ENCODE measurements at regions of chr10 and their contacts with region 1.

Region 1: DNA sequence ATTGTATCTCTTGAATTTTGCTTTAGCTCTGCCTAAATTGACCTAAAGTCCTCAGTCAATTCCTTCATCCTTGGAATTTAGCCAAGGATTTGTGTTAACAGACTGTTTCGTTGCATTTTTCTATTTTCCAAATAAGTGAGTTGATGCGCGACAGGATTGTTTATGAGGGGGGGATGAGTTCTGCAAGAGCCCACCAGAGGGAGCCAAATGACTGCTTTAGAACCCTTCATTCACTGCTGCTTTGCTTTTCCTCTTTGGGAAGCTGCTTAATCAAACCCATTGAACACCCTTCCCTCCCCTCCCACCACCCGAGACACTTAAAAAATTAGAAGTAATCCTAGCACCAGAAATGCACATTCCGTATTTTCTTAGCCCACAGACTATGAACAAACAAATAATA is 33.7 kb upstream of the PTF1A start:
- DNase-seq: peak; percentile 60
- H3K4me3 ChIP-seq: no peak overlapping the region
- H3K27ac ChIP-seq: no peak overlapping the region
- H3K4me1 ChIP-seq: peaks cover 3% of the 10 kb centered on the region
- H3K27me3 ChIP-seq: no peaks in the 10 kb centered on the region
- CTCF ChIP-seq: peak; percentile 70 to 83
- POLR2A ChIP-seq: no peak

Region 2: DNA sequence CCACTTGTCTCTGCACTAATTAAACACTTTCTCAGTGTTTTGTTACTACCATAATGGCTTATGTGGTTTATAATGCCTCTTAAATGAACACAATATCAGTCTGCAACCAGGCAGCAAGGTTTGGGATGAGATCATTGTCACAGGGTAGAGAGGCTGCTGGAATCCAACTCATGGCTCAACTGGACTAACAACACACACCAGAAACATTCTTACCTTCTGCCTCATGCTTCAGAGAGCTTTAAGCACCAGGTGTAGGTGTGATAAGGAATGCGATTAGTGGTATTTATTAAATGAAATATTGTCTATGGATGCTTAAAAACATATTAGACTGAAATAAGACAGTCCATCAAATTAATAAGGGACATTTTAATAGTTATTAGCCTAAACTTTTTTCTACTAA is 59.1 kb after region 1 on chr10:
- CTCF ChIA-PET with region 1: no interaction called
- POLR2A ChIA-PET with region 1: no interaction called
- dilution Hi-C with region 1: no loop called
- intact Hi-C with region 1: no loop called
- DNase-seq: no peak
- H3K4me3 ChIP-seq: no peak overlapping the region
- H3K27ac ChIP-seq: no peak overlapping the region
- H3K4me1 ChIP-seq: no peaks in the 10 kb centered on the region
- H3K27me3 ChIP-seq: no peaks in the 10 kb centered on the region
- CTCF ChIP-seq: no peak
- POLR2A ChIP-seq: no peak

Region 3: DNA sequence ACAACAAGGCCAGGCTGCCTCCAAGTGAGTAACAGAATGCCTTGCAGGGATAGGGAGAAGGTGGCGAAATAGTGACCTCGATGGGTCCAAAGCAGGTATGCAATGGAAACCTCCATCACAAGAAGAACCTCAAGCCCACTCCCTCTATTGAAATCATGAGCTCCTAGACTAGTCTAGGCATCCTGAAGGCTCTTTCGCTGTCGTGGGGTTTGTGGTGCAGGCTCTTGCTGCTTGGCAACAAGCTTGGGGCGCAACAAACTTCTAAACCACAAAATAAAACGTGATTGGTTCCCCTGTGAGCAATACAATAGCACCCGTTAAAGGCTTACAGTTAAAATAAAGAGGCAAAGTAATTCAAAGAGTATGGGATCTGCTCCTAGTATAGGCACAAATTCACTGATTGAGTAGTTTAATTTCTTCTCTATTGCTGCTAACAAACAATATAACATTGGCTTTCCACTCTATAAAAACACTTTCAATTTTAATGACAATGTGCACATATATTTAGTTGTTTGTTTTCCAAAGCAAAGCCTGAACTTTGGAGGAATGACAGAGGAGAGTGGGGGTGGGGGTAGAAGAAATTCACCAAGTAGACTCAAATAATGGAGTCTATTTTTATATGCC is 122.2 kb after region 1 on chr10:
- CTCF ChIA-PET with region 1: no interaction called
- POLR2A ChIA-PET with region 1: no interaction called
- dilution Hi-C with region 1: no loop called
- intact Hi-C with region 1: no loop called
- DNase-seq: no peak
- H3K4me3 ChIP-seq: no peak overlapping the region
- H3K27ac ChIP-seq: no peak overlapping the region
- H3K4me1 ChIP-seq: no peaks in the 10 kb centered on the region
- H3K27me3 ChIP-seq: no peaks in the 10 kb centered on the region
- CTCF ChIP-seq: no peak
- POLR2A ChIP-seq: no peak

Region 4: DNA sequence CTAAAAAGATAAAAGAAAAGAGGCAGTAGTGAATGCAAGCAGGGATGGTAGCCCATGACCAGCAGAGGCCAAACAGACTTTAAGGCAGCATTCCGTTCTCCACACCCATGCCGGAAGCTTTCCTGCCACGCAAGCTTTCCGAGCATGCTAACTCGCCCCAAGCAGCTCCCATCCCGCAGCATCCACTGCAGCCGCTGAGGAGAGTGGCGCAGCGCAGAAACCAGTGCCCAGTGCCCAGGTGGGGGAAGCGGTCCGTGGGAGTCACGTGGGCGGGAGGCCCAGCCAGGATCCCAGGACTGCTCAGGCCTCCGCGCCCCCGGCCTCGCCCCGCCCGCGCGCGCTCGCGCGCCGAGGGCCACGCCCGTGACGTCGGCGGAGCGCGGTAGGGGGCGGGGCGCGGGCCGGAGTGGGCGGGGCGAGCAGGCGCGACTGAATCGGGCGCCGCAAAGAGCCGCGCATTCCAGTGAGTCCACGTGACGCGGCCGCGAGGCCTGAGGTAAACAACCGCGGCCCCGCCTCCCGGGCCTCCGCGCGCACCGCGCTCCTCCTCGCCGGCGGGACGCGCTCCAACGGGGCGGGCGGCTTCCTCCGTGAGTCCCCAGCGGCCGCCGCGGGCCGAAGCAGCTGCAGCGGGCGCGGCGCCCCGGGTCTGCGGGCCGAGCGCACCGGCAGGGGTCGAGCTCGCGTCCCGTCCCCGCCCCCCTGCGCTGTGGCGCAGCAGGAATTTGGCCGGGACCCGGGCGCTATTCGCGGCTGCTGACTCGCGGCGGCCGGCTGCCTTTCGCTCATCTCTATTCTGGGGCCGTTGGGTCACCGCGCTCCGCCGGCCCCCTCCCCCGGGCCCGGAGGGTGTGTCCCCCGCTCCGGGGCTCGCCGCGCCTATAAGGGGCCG is 280.4 kb after region 1 on chr10 and contains the start of gene OTUD1:
- CTCF ChIA-PET with region 1: no interaction called
- POLR2A ChIA-PET with region 1: no interaction called
- dilution Hi-C with region 1: no loop called
- intact Hi-C with region 1: no loop called
- DNase-seq: peak; percentile 91
- H3K4me3 ChIP-seq: peak within 1 kb of the TSS; percentile 39 to 82 (median 54)
- H3K27ac ChIP-seq: peak within 1 kb of the TSS; percentile 36
- H3K4me1 ChIP-seq: peaks cover 4% of the 10 kb centered on the region
- H3K27me3 ChIP-seq: no peaks in the 10 kb centered on the region
- CTCF ChIP-seq: peak in 1 of 2 donors; percentile 4
- POLR2A ChIP-seq: no peak
- total RNA-seq, gene OTUD1: 4.8 and 6.0 TPM in 2 replicates

Region 5: GRCh38 chr10:23525406-23525805 is 367.0 kb after region 1 on chr10:
- CTCF ChIA-PET with region 1: interaction called, 3 read pairs
- POLR2A ChIA-PET with region 1: no interaction called
- dilution Hi-C with region 1: no loop called
- intact Hi-C with region 1: loop called (anchors 2 kb)
- DNase-seq: no peak
- H3K4me3 ChIP-seq: no peak overlapping the region
- H3K27ac ChIP-seq: no peak overlapping the region
- H3K4me1 ChIP-seq: no peaks in the 10 kb centered on the region
- H3K27me3 ChIP-seq: no peaks in the 10 kb centered on the region
- CTCF ChIP-seq: peak in 1 of 2 donors; percentile 6
- POLR2A ChIP-seq: no peak

Region 6: DNA sequence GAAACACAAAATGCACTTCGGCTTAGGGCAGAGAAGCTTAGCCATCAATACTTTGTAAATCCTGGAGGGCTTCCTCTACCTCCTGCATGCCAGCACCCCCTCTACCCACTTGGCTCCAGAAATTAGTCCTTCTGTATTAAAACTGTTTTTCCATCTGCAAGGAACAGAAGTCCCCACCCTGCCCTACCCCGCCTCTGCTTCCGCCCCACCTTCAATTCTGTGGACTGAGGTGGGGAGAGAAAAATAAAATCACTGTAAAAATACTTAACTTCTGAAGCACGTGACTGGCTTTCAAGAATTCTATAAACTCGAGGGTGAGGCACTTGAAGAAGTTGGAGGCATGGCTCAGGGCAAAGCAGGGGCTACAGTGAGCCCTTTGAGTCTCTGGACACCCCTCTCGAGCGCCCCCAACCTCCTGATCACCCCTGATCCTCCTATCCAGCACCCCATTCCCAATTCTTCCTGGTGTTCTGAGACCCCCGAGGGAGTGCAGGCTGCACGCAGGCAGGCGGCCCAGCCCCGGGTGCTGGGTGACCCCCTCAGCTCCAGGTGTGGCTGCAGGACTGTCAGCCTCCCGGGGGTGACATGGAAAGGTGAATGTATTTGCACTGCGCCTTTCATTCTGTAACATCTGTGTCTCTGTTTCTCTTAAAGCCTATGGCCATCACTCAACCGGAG is 1043.3 kb after region 1 on chr10:
- CTCF ChIA-PET with region 1: no interaction called
- POLR2A ChIA-PET with region 1: no interaction called
- dilution Hi-C with region 1: no loop called
- intact Hi-C with region 1: loop called (anchors 2 kb)
- DNase-seq: no peak
- H3K4me3 ChIP-seq: no peak overlapping the region
- H3K27ac ChIP-seq: no peak overlapping the region
- H3K4me1 ChIP-seq: no peaks in the 10 kb centered on the region
- H3K27me3 ChIP-seq: no peaks in the 10 kb centered on the region
- CTCF ChIP-seq: no peak
- POLR2A ChIP-seq: no peak

Region 7: GRCh38 chr10:24503461-24504320 is 1345.3 kb after region 1 on chr10:
- CTCF ChIA-PET with region 1: interaction called, 10 read pairs
- POLR2A ChIA-PET with region 1: no interaction called
- dilution Hi-C with region 1: no loop called
- intact Hi-C with region 1: no loop called
- DNase-seq: peak; percentile 33
- H3K4me3 ChIP-seq: no peak overlapping the region
- H3K27ac ChIP-seq: no peak overlapping the region
- H3K4me1 ChIP-seq: no peaks in the 10 kb centered on the region
- H3K27me3 ChIP-seq: peaks cover 0 to 2% of the 10 kb centered on the region in 2 experiments
- CTCF ChIP-seq: peak; percentile 34 to 42
- POLR2A ChIP-seq: no peak

Region 8: DNA sequence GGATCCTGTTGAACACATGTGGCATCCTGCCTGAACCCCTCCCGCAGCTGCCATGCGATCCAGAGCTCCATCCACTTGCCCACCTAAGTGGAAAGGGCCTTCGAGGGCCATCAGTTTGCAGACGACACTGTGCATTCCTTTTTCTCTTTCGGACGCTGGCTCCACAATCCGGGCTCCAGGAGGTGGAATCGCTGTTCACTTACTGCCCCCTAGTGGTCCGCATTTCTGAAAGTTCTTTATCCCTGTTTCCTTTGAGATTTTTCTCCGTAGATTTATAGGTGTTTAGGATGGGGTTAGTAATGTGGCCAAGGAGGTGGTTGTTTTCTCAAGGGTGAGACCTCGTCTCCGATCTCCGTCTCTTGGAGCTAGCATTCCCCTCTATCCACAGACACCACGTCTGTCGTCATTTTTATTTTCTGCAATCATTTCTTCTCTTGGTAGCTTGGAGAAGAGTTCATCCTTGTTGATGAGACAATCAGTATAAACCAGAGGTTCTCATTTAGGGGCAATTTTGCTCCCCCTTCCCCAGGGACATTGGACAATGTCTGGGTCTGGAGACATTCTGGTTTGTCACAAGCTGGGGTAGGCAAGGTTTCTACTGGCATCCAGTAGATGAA is 1360.7 kb after region 1 on chr10:
- CTCF ChIA-PET with region 1: interaction called, 37 read pairs
- POLR2A ChIA-PET with region 1: no interaction called
- dilution Hi-C with region 1: no loop called
- intact Hi-C with region 1: loop called (anchors 2 kb)
- DNase-seq: peak; percentile 50
- H3K4me3 ChIP-seq: no peak overlapping the region
- H3K27ac ChIP-seq: no peak overlapping the region
- H3K4me1 ChIP-seq: no peaks in the 10 kb centered on the region
- H3K27me3 ChIP-seq: no peaks in the 10 kb centered on the region
- CTCF ChIP-seq: peak; percentile 72 to 76
- POLR2A ChIP-seq: no peak

Measured in endothelial cell of umbilical vein (primary cell).